PC-9 (cell line): ENCODE measurements at regions of chr4 and their contacts with region 1.

Region 1: GRCh38 chr4:128060699-128061565 is at the start of gene LARP1B:
- DNase-seq: peak; percentile 82 to 98
- H3K4me3 ChIP-seq: peak within 1 kb of the TSS; percentile 88
- H3K27ac ChIP-seq: peak within 1 kb of the TSS; percentile 93
- H3K4me1 ChIP-seq: peaks cover 4% of the 10 kb centered on the region; the same call in 1 of the 2 replicates
- H3K27me3 ChIP-seq: no peaks in the 10 kb centered on the region
- CTCF ChIP-seq: no peak
- total RNA-seq, gene LARP1B: 17.7 and 22.0 TPM in 2 replicates

Region 2: GRCh38 chr4:127604949-127605709 is 455.8 kb before region 1 on chr4:
- CTCF ChIA-PET with region 1: no interaction called
- POLR2A ChIA-PET with region 1: no interaction called
- intact Hi-C with region 1: loop called (anchors 10 kb)
- DNase-seq: peak in 1 of 2 experiments; percentile 64
- H3K4me3 ChIP-seq: no peak overlapping the region
- H3K27ac ChIP-seq: no peak overlapping the region
- H3K4me1 ChIP-seq: 0 out of 2 replicates have a peak, but pooled peaks cover 5% of the 10 kb centered on the region
- H3K27me3 ChIP-seq: no peaks in the 10 kb centered on the region
- CTCF ChIP-seq: peak; percentile 95

Region 3: GRCh38 chr4:127880764-127881562 is 180.0 kb before region 1 on chr4 and contains the start of gene PLK4:
- CTCF ChIA-PET with region 1: interaction called, 7 read pairs
- POLR2A ChIA-PET with region 1: no interaction called
- intact Hi-C with region 1: loop called (anchors 5 kb)
- DNase-seq: peak; percentile 73 to 93
- H3K4me3 ChIP-seq: peak within 1 kb of the TSS; percentile 83
- H3K27ac ChIP-seq: peak within 1 kb of the TSS; percentile 73
- H3K4me1 ChIP-seq: peaks cover 15% of the 10 kb centered on the region; the same call in 1 of the 2 replicates
- H3K27me3 ChIP-seq: no peaks in the 10 kb centered on the region
- CTCF ChIP-seq: no peak
- total RNA-seq, gene PLK4: 23.3 and 25.7 TPM in 2 replicates

Region 4: GRCh38 chr4:127965062-127965802 is 95.7 kb before region 1 on chr4 and contains the starts of genes ABHD18 and MFSD8:
- CTCF ChIA-PET with region 1: interaction called, 5 read pairs
- POLR2A ChIA-PET with region 1: interaction called, 12 read pairs
- intact Hi-C with region 1: loop called (anchors 2 kb)
- DNase-seq: peak; percentile 90 to 100
- H3K4me3 ChIP-seq: peak within 1 kb of the TSS; percentile 77
- H3K27ac ChIP-seq: peak within 1 kb of the TSS; percentile 74
- H3K4me1 ChIP-seq: no peaks in the 10 kb centered on the region; the same call in 1 of the 2 replicates
- H3K27me3 ChIP-seq: no peaks in the 10 kb centered on the region
- CTCF ChIP-seq: peak; percentile 46; the same call in 1 of the 2 replicates
- total RNA-seq, gene ABHD18: 10.4 and 12.4 TPM in 2 replicates
- total RNA-seq, gene MFSD8: 19.0 and 21.4 TPM in 2 replicates

Region 5: GRCh38 chr4:128130621-128131020 is 69.7 kb after region 1 on chr4:
- CTCF ChIA-PET with region 1: no interaction called
- POLR2A ChIA-PET with region 1: no interaction called
- intact Hi-C with region 1: no loop called
- DNase-seq: no peak
- H3K4me3 ChIP-seq: no peak overlapping the region
- H3K27ac ChIP-seq: no peak overlapping the region
- H3K4me1 ChIP-seq: no peaks in the 10 kb centered on the region
- H3K27me3 ChIP-seq: no peaks in the 10 kb centered on the region
- CTCF ChIP-seq: no peak

Region 6: DNA sequence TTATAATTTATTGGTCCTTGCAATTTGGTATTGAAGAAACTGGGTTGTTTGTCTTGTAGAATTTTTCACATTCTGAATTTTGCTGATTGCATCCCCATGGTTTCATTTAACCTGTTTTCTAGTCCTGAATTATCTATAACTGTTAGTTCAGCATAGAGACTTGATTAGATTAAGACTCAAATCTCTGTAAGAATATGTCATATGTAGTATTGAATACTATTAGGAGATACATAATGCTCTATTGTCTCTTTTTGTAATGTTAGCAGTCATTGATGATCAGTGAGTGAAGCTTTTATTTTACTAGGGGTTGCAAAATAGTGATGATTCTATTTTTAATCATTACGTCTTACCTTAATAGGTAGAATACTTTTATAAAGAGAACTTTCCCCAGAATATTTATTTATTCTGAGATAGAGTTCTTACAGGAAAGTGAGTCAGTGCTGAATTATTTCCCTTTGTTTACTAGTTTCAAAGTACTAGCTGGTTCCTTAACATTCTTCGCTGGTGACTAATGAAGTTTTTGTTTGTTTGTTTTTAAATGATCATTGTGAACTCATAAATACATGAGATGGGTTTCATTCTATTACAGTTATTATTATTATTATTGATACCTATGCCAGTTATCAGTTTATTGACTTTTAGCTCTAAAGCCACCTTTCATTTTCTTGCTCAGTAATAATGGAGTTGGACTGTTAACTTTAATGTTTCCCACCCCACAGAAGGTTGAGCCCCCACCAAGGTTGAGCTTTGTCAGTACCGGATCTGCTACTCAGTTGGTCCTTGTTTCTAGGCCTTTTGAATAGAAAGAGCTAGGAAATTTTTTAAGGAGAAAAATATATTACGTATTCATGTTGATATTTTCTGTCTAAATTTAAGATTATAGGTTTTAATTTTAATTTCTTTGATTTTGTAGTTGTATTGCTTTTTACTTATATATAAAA is 102.5 kb after region 1 on chr4:
- CTCF ChIA-PET with region 1: no interaction called
- POLR2A ChIA-PET with region 1: interaction called, 4 read pairs
- intact Hi-C with region 1: loop called (anchors 5 kb)
- DNase-seq: peak in 1 of 2 experiments; percentile 89
- H3K4me3 ChIP-seq: no peak overlapping the region; the same call in 1 of the 2 replicates
- H3K27ac ChIP-seq: peak overlapping the region; percentile 73
- H3K4me1 ChIP-seq: peaks cover 28% of the 10 kb centered on the region
- H3K27me3 ChIP-seq: no peaks in the 10 kb centered on the region
- CTCF ChIP-seq: no peak

Region 7: DNA sequence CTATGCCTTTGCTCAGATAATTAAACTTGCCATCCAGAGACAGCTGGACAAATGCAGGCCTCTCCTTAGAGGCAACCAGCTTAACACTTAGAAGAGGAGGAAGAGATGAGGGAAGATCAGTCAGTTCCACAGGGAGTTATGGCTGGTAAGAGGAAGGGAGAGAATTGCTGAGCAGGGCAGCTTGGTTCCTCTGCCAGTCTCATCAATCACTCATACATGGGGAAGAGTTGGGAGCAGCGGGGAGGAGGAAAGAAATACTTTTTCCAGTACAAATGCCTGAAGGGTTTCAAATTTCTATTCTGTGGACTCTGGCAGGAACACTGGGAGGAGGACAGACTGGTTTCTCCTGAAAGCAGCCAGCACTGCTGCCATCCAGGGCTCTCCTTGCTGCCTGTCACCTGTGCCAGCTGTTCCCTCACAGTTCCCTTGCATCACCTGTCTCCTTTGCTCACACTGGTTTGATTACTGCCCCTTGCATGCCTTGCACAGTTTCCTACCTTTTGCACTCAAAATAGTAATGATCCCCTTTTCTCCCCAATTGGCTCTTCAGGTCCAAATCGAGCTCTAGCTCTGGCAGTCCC is 167.1 kb after region 1 on chr4:
- CTCF ChIA-PET with region 1: no interaction called
- POLR2A ChIA-PET with region 1: no interaction called
- intact Hi-C with region 1: loop called (anchors 1 kb)
- DNase-seq: peak; percentile 73 to 76
- H3K4me3 ChIP-seq: no peak overlapping the region
- H3K27ac ChIP-seq: peak overlapping the region; percentile 51
- H3K4me1 ChIP-seq: peaks cover 17% of the 10 kb centered on the region
- H3K27me3 ChIP-seq: no peaks in the 10 kb centered on the region
- CTCF ChIP-seq: no peak

Region 8: GRCh38 chr4:128649575-128650205 is 588.8 kb after region 1 on chr4:
- CTCF ChIA-PET with region 1: no interaction called
- POLR2A ChIA-PET with region 1: no interaction called
- intact Hi-C with region 1: no loop called
- DNase-seq: no peak
- H3K4me3 ChIP-seq: no peak overlapping the region
- H3K27ac ChIP-seq: no peak overlapping the region
- H3K4me1 ChIP-seq: no peaks in the 10 kb centered on the region
- H3K27me3 ChIP-seq: no peaks in the 10 kb centered on the region
- CTCF ChIP-seq: no peak